Activated CD4-positive, alpha-beta T cell treated with anti-CD3 and anti-CD28 coated beads, Interleukin-2, amount 10 ng/mL, durations not matched to agents 7 days and 5 days (primary cell): ENCODE measurements at regions of chr7 and their contacts with region 1.

Region 1: GRCh38 chr7:134458806-134459698 is at the start of gene AKR1B1:
- DNase-seq: peak; percentile 88
- H3K4me3 Mint-ChIP-seq: peak within 1 kb of the TSS; percentile 80
- H3K27ac Mint-ChIP-seq: peak within 1 kb of the TSS; percentile 86
- H3K4me1 Mint-ChIP-seq: peaks cover 47% of the 10 kb centered on the region
- H3K27me3 Mint-ChIP-seq: no peaks in the 10 kb centered on the region
- total RNA-seq, gene AKR1B1: 98.1 to 106 TPM

Region 2: GRCh38 chr7:134394046-134394445 is 65.0 kb before region 1 on chr7:
- CTCF ChIA-PET with region 1: no interaction called
- POLR2A ChIA-PET with region 1: no interaction called
- DNase-seq: no peak
- H3K4me3 Mint-ChIP-seq: no peak overlapping the region
- H3K27ac Mint-ChIP-seq: no peak overlapping the region
- H3K4me1 Mint-ChIP-seq: no peaks in the 10 kb centered on the region
- H3K27me3 Mint-ChIP-seq: peaks cover 11% of the 10 kb centered on the region

Region 3: DNA sequence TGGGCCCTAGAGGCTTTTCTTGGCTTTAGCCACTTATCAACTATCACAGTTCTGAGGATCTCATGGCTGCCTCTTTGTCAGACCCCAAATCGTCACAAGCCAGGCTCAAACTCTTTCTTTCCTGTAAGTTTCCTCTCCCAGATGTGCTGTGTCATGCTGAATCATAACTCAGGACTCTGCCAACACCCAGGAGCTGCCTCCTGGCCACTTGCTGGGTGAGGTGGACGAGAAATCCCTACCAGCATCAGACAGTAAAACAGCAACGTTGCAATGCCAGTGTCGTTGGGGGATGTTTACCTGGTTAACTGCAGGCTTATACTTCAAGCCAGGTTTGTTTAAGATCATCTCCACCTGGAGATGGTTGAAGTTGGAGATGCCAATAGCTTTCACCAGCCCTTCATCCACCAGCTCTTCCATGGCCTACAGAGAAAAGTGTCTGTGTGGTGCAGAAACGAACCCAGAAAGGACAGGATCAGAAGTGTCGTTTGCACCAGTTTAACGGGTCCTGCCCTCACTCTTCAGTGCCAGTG is 10.3 kb before region 1 on chr7:
- CTCF ChIA-PET with region 1: interaction called, 11 read pairs
- POLR2A ChIA-PET with region 1: no interaction called
- DNase-seq: no peak
- H3K4me3 Mint-ChIP-seq: no peak overlapping the region
- H3K27ac Mint-ChIP-seq: no peak overlapping the region
- H3K4me1 Mint-ChIP-seq: peaks cover 13% of the 10 kb centered on the region
- H3K27me3 Mint-ChIP-seq: no peaks in the 10 kb centered on the region